Activated naive CD4-positive, alpha-beta T cell treated with anti-CD3 and anti-CD28 coated beads for 36 hours (primary cell): ENCODE measurements at regions of chr9 and their contacts with region 1.

Region 1: GRCh38 chr9:104927912-104928740 is at the start of gene ABCA1:
- DNase-seq: peak; percentile 94
- H3K4me3 Mint-ChIP-seq: peak within 1 kb of the TSS; percentile 86
- H3K27ac Mint-ChIP-seq: peak within 1 kb of the TSS; percentile 80
- H3K4me1 Mint-ChIP-seq: peaks cover 21% of the 10 kb centered on the region
- H3K27me3 Mint-ChIP-seq: peaks cover 2% of the 10 kb centered on the region
- total RNA-seq, gene ABCA1: 31.3 to 31.5 TPM

Region 2: GRCh38 chr9:104093647-104094533 is 834.2 kb before region 1 on chr9 and contains the start of gene SMC2:
- CTCF ChIA-PET with region 1: no interaction called
- intact Hi-C with region 1: loop called (anchors 5 kb)
- DNase-seq: peak; percentile 93
- H3K4me3 Mint-ChIP-seq: peak within 1 kb of the TSS; percentile 99
- H3K27ac Mint-ChIP-seq: peak within 1 kb of the TSS; percentile 95
- H3K4me1 Mint-ChIP-seq: peaks cover 35% of the 10 kb centered on the region
- H3K27me3 Mint-ChIP-seq: no peaks in the 10 kb centered on the region
- total RNA-seq, gene SMC2: 62.0 to 63.8 TPM

Region 3: GRCh38 chr9:104911032-104911607 is 17.0 kb before region 1 on chr9:
- CTCF ChIA-PET with region 1: no interaction called
- intact Hi-C with region 1: no loop called
- DNase-seq: no peak
- H3K4me3 Mint-ChIP-seq: no peak overlapping the region
- H3K27ac Mint-ChIP-seq: no peak overlapping the region
- H3K4me1 Mint-ChIP-seq: peaks cover 28% of the 10 kb centered on the region
- H3K27me3 Mint-ChIP-seq: no peaks in the 10 kb centered on the region

Region 4: DNA sequence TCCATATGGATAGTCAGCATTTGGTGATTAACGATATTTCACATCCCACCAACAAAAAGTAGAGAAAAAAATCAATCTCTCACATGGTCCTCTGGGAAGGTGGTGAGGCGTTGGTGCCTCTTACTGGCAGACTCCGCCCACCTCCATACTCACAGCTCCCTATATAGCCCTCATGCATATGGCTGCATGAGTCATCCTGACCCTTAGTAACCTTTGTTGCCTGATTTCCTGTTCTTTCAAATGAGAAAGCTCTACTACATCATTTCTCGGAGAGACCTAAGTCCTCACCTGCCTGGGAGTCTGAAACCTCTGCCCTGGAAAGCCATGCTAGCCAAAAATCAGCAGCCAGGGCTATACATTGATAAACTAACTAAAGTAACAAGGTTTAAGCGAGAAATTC is 33.1 kb after region 1 on chr9:
- CTCF ChIA-PET with region 1: interaction called, 6 read pairs
- intact Hi-C with region 1: loop called (anchors 1 kb)
- DNase-seq: peak; percentile 92
- H3K4me3 Mint-ChIP-seq: peak overlapping the region; percentile 62
- H3K27ac Mint-ChIP-seq: peak overlapping the region; percentile 96
- H3K4me1 Mint-ChIP-seq: peaks cover 39% of the 10 kb centered on the region
- H3K27me3 Mint-ChIP-seq: no peaks in the 10 kb centered on the region

Region 5: DNA sequence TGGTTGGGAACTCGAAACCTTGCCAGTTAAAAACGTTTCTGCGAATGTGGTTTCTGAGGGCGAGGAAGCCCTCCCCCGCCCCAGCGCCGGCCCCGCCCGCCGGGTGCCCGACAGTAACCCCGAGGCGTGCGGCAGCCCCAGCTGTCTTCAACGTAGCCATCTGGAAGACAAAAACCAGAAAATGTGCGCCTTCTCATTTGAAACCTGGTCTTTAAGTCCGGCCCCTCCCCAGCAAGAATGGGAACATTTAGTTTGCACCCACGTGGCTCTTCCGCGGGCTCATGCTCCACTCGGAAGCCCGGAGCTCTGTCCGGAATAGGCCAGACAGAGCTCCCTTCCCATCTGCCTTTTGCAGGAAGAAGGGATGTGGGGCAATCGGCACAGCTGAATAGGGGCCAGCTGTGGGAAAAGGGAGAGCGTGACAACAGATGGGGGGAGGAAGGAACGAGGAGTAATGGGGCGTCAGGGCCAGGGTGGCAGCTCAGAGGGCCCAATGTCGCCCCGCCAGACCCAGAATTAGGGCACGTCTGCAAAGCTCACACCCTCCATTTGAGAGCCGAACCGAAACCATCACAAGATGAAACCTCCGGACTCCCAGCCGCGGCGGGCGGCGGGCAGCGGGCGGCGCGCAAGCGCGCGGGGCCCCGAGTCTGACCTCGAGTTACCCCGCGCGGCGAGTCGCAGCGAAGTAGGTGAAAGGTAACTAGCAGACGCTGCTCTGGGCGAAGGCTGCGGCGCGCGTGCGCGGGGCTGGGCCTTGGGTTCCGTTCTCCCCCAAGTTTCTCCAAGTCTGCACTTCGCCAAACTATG is 63.2 kb after region 1 on chr9:
- CTCF ChIA-PET with region 1: interaction called, 20 read pairs
- intact Hi-C with region 1: loop called (anchors 1 kb)
- DNase-seq: peak; percentile 90
- H3K4me3 Mint-ChIP-seq: peak overlapping the region; percentile 82
- H3K27ac Mint-ChIP-seq: peak overlapping the region; percentile 97
- H3K4me1 Mint-ChIP-seq: peaks cover 54% of the 10 kb centered on the region
- H3K27me3 Mint-ChIP-seq: peaks cover 14% of the 10 kb centered on the region

Region 6: GRCh38 chr9:105114964-105115728 is 187.0 kb after region 1 on chr9:
- CTCF ChIA-PET with region 1: interaction called, 3 read pairs
- intact Hi-C with region 1: loop called (anchors 2 kb)
- DNase-seq: peak; percentile 68
- H3K4me3 Mint-ChIP-seq: no peak overlapping the region
- H3K27ac Mint-ChIP-seq: no peak overlapping the region
- H3K4me1 Mint-ChIP-seq: peaks cover 28% of the 10 kb centered on the region
- H3K27me3 Mint-ChIP-seq: no peaks in the 10 kb centered on the region

Region 7: GRCh38 chr9:105141146-105141975 is 213.2 kb after region 1 on chr9:
- CTCF ChIA-PET with region 1: no interaction called
- intact Hi-C with region 1: no loop called
- DNase-seq: no peak
- H3K4me3 Mint-ChIP-seq: no peak overlapping the region
- H3K27ac Mint-ChIP-seq: no peak overlapping the region
- H3K4me1 Mint-ChIP-seq: peaks cover 12% of the 10 kb centered on the region
- H3K27me3 Mint-ChIP-seq: no peaks in the 10 kb centered on the region

Region 8: GRCh38 chr9:105244003-105244733 is 316.0 kb after region 1 on chr9 and contains the start of gene SLC44A1:
- CTCF ChIA-PET with region 1: interaction called, 7 read pairs
- intact Hi-C with region 1: loop called (anchors 1 kb)
- DNase-seq: peak; percentile 95
- H3K4me3 Mint-ChIP-seq: peak within 1 kb of the TSS; percentile 83
- H3K27ac Mint-ChIP-seq: peak within 1 kb of the TSS; percentile 76
- H3K4me1 Mint-ChIP-seq: peaks cover 15% of the 10 kb centered on the region
- H3K27me3 Mint-ChIP-seq: peaks cover 14% of the 10 kb centered on the region
- total RNA-seq, gene SLC44A1: 17.6 to 18.6 TPM

Region 9: DNA sequence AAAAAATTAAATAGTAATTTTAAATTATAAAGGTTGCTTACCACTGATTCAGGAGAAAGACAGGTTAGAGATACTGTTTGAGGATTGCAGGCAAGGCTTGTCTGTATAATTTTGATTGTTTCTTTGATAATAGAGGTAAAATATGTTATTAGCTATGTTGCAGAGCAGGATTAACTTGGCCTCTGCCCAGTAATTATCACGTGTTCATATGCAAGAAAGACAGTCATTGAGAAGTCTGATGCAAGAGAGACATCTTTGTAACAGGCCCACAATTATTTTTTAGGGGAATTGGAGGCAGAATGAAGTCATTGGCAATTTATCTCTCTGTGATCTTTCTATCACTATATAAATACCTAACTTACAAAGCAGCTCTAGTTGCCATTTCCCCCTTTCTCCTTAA is 362.3 kb after region 1 on chr9:
- CTCF ChIA-PET with region 1: no interaction called
- intact Hi-C with region 1: no loop called
- DNase-seq: no peak
- H3K4me3 Mint-ChIP-seq: no peak overlapping the region
- H3K27ac Mint-ChIP-seq: no peak overlapping the region
- H3K4me1 Mint-ChIP-seq: peaks cover 19% of the 10 kb centered on the region
- H3K27me3 Mint-ChIP-seq: no peaks in the 10 kb centered on the region